B cell (primary cell): ENCODE measurements at regions of chr1 and their contacts with region 1.

Region 1: DNA sequence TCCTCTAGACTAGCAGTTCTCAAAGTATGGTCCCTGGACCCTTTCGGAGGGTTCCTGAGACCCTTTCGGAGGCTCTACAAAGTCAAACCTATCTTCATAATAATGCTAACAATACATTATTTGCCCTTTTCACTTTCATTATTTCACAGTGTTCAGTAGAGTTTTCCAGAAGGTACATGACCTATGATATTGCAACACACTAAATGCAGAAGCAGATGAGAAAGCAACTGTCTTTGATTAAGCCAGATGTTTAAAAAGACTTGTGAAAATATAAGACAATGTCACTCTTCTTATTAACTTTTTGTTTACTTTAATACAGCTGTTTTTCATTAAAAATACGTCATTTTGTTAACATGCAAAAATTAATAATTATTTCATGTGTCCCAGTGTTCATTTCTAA is 5.8 kb downstream of the KCNJ10 start:
- DNase-seq: no peak
- ATAC-seq: no peak
- H3K4me3 ChIP-seq: no peak overlapping the region
- H3K4me3 Mint-ChIP-seq: no peak overlapping the region
- H3K27ac ChIP-seq: no peak overlapping the region
- H3K27ac Mint-ChIP-seq: no peak overlapping the region
- H3K4me1 ChIP-seq: no peaks in the 10 kb centered on the region
- H3K4me1 Mint-ChIP-seq: peaks cover under 1% of the 10 kb centered on the region
- H3K27me3 ChIP-seq: peaks cover 0 to 36% (median 3%) of the 10 kb centered on the region in 4 experiments
- H3K27me3 Mint-ChIP-seq: peaks cover 37% of the 10 kb centered on the region
- CTCF ChIP-seq: no peak

Region 2: GRCh38 chr1:160078512-160079195 is 14.5 kb after region 1 on chr1:
- CTCF ChIA-PET with region 1: interaction called, 12 read pairs
- POLR2A ChIA-PET with region 1: no interaction called
- intact Hi-C with region 1: no loop called
- DNase-seq: peak; percentile 66
- ATAC-seq: peak; percentile 70
- H3K4me3 ChIP-seq: no peak overlapping the region
- H3K4me3 Mint-ChIP-seq: no peak overlapping the region
- H3K27ac ChIP-seq: no peak overlapping the region
- H3K27ac Mint-ChIP-seq: no peak overlapping the region
- H3K4me1 ChIP-seq: peaks cover 0 to 4% of the 10 kb centered on the region in 2 donors
- H3K4me1 Mint-ChIP-seq: peaks cover 2% of the 10 kb centered on the region
- H3K27me3 ChIP-seq: peaks cover 0 to 51% (median 35%) of the 10 kb centered on the region in 4 experiments
- H3K27me3 Mint-ChIP-seq: peaks cover 54% of the 10 kb centered on the region
- CTCF ChIP-seq: peak; percentile 83

Region 3: GRCh38 chr1:160474392-160475242 is 410.5 kb after region 1 on chr1:
- CTCF ChIA-PET with region 1: no interaction called
- POLR2A ChIA-PET with region 1: no interaction called
- intact Hi-C with region 1: no loop called
- DNase-seq: peak; percentile 54
- ATAC-seq: peak; percentile 94
- H3K4me3 ChIP-seq: peak overlapping the region in 2 of 5 experiments; percentile 20 to 42
- H3K4me3 Mint-ChIP-seq: no peak overlapping the region
- H3K27ac ChIP-seq: peak overlapping the region; percentile 78 to 87
- H3K27ac Mint-ChIP-seq: no peak overlapping the region
- H3K4me1 ChIP-seq: peaks cover 49 to 54% of the 10 kb centered on the region in 2 donors
- H3K4me1 Mint-ChIP-seq: peaks cover 26% of the 10 kb centered on the region
- H3K27me3 ChIP-seq: no peaks in the 10 kb centered on the region
- H3K27me3 Mint-ChIP-seq: no peaks in the 10 kb centered on the region
- CTCF ChIP-seq: no peak